ENCODE measurements at regions of chr1 and their contacts with region 1.

Region 1: GRCh38 chr1:43974443-43975248 is at the start of gene ATP6V0B:
- DNase-seq: peak; percentile 85 to 96 (median 91)
- ATAC-seq: peak; percentile 72
- H3K4me3 ChIP-seq: peak within 1 kb of the TSS; percentile 99
- H3K4me3 Mint-ChIP-seq: peak within 1 kb of the TSS; percentile 96
- H3K27ac ChIP-seq: peak within 1 kb of the TSS; percentile 78 to 86
- H3K27ac Mint-ChIP-seq: peak within 1 kb of the TSS; percentile 92
- H3K4me1 ChIP-seq: peaks cover 61% of the 10 kb centered on the region
- H3K4me1 Mint-ChIP-seq: peaks cover 68% of the 10 kb centered on the region
- H3K27me3 ChIP-seq: peaks cover under 1% of the 10 kb centered on the region in 2 experiments
- H3K27me3 Mint-ChIP-seq: peaks cover under 1% of the 10 kb centered on the region
- CTCF ChIP-seq: no peak
- total RNA-seq, gene ATP6V0B: 42.9 to 47.0 TPM

Region 2: GRCh38 chr1:43934101-43934985 is 40.3 kb before region 1 on chr1:
- CTCF ChIA-PET with region 1: interaction called, 13 read pairs
- POLR2A ChIA-PET with region 1: interaction called, 4 read pairs
- intact Hi-C with region 1: no loop called
- DNase-seq: peak in 13 of 14 experiments; percentile 18 to 69 (median 40)
- ATAC-seq: peak; percentile 65
- H3K4me3 ChIP-seq: no peak overlapping the region
- H3K4me3 Mint-ChIP-seq: peak overlapping the region; percentile 48
- H3K27ac ChIP-seq: no peak overlapping the region
- H3K27ac Mint-ChIP-seq: no peak overlapping the region
- H3K4me1 ChIP-seq: peaks cover 33% of the 10 kb centered on the region
- H3K4me1 Mint-ChIP-seq: peaks cover 15% of the 10 kb centered on the region
- H3K27me3 ChIP-seq: peaks cover 35 to 41% of the 10 kb centered on the region in 2 experiments
- H3K27me3 Mint-ChIP-seq: peaks cover 36% of the 10 kb centered on the region
- CTCF ChIP-seq: peak; percentile 68

Region 3: GRCh38 chr1:43958351-43959255 is 16.0 kb before region 1 on chr1:
- CTCF ChIA-PET with region 1: no interaction called
- POLR2A ChIA-PET with region 1: no interaction called
- intact Hi-C with region 1: no loop called
- DNase-seq: no peak
- ATAC-seq: no peak
- H3K4me3 ChIP-seq: no peak overlapping the region
- H3K4me3 Mint-ChIP-seq: no peak overlapping the region
- H3K27ac ChIP-seq: no peak overlapping the region
- H3K27ac Mint-ChIP-seq: no peak overlapping the region
- H3K4me1 ChIP-seq: no peaks in the 10 kb centered on the region
- H3K4me1 Mint-ChIP-seq: no peaks in the 10 kb centered on the region
- H3K27me3 ChIP-seq: no peaks in the 10 kb centered on the region
- H3K27me3 Mint-ChIP-seq: no peaks in the 10 kb centered on the region
- CTCF ChIP-seq: no peak

Region 4: GRCh38 chr1:43991476-43992231 is 17.0 kb after region 1 on chr1 and contains the start of gene CCDC24:
- CTCF ChIA-PET with region 1: interaction called, 10 read pairs
- POLR2A ChIA-PET with region 1: interaction called, 5 read pairs
- intact Hi-C with region 1: loop called in 1 of 2 experiments (anchors 1 kb)
- DNase-seq: peak; percentile 39 to 87 (median 67)
- ATAC-seq: peak; percentile 82
- H3K4me3 ChIP-seq: peak within 1 kb of the TSS; percentile 78
- H3K4me3 Mint-ChIP-seq: peak within 1 kb of the TSS; percentile 95
- H3K27ac ChIP-seq: no peak within 1 kb of the TSS
- H3K27ac Mint-ChIP-seq: peak within 1 kb of the TSS; percentile 62
- H3K4me1 ChIP-seq: peaks cover 19% of the 10 kb centered on the region
- H3K4me1 Mint-ChIP-seq: peaks cover 16% of the 10 kb centered on the region
- H3K27me3 ChIP-seq: no peaks in the 10 kb centered on the region
- H3K27me3 Mint-ChIP-seq: no peaks in the 10 kb centered on the region
- CTCF ChIP-seq: no peak
- total RNA-seq, gene CCDC24: 0.98 to 1.4 TPM

Region 5: DNA sequence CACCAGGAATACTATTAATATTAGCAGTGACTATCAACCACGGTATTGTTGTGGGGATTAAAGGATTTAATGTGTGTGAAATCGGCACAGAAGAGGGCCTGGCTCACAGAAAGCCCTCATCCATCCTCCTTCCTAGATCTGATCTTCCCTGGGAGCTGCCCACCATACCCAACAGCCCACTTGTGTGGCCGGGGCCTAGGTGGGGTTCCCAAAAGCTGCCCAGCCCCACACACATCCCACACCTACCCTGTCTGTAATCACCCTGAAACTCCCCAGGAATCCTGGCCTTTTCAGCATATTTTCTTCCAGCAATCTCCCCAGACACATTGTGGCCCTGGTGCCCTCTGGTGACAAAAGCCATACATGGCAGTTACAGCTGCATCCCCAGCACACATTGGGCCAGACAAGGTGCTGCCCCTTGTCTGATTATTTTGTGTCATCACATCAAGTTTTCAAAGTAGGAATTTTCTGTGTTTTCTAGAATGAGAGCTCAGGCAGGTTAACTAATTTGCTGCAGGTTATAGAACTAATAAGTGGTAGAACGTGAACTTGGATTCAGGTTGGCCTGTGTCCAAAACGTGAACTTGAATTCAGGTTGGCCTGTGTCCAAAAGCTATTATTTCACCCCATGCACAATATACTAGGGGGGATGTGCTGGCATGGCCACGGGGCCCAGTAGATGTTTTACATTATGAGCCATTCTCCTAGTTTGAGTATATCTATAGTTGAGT is 61.9 kb after region 1 on chr1:
- CTCF ChIA-PET with region 1: interaction called, 13 read pairs
- POLR2A ChIA-PET with region 1: no interaction called
- intact Hi-C with region 1: loop called in 1 of 2 experiments (anchors 2 kb)
- DNase-seq: peak; percentile 52 to 82 (median 61)
- ATAC-seq: peak; percentile 91
- H3K4me3 ChIP-seq: no peak overlapping the region
- H3K4me3 Mint-ChIP-seq: no peak overlapping the region
- H3K27ac ChIP-seq: no peak overlapping the region
- H3K27ac Mint-ChIP-seq: no peak overlapping the region
- H3K4me1 ChIP-seq: peaks cover 3% of the 10 kb centered on the region
- H3K4me1 Mint-ChIP-seq: peaks cover 4% of the 10 kb centered on the region
- H3K27me3 ChIP-seq: no peaks in the 10 kb centered on the region
- H3K27me3 Mint-ChIP-seq: no peaks in the 10 kb centered on the region
- CTCF ChIP-seq: peak; percentile 84

Region 6: DNA sequence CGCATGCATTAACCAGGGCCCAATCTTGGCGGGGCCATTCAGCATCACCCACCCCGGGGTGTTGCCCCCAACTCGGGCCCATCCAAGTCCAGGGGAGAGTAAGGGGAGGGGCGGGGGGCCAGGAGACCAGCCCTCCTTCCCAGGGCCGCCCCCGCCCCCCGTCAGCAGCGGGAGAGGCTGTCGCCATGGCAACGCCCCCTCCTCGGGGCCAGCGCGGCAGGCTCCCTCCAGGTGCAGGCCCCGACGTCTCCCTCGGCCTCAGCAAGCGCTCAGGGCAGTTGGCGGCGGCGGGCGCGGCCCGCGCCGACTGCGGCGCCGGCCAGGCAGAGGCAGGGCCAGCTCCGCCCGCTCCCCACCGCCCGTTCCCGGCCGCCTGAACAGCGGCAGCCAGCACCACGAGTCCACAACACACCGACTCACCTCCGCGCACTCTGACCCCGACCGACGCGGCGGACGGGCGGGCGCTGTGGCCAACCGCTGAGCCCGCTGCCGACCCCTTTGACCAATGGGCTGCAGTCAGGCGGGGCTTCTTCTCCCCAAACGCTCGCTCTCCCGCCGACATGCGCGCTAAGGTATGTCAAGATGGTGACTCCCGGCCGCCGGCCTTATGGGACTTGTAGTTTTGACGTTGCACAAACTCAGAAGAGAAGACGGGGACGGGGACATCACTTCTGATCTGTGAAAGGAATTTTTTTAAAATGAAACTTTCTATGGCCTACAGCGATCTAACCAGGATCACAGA is 380.4 kb after region 1 on chr1 and contains the start of gene ERI3:
- CTCF ChIA-PET with region 1: no interaction called
- POLR2A ChIA-PET with region 1: no interaction called
- intact Hi-C with region 1: loop called in 1 of 2 experiments (anchors 10 kb)
- DNase-seq: peak; percentile 93 to 98 (median 95)
- ATAC-seq: peak; percentile 100
- H3K4me3 ChIP-seq: peak within 1 kb of the TSS; percentile 80
- H3K4me3 Mint-ChIP-seq: peak within 1 kb of the TSS; percentile 94
- H3K27ac ChIP-seq: peak within 1 kb of the TSS in 1 of 2 donors; percentile 29
- H3K27ac Mint-ChIP-seq: peak within 1 kb of the TSS; percentile 63
- H3K4me1 ChIP-seq: peaks cover 19% of the 10 kb centered on the region
- H3K4me1 Mint-ChIP-seq: peaks cover 45% of the 10 kb centered on the region
- H3K27me3 ChIP-seq: no peaks in the 10 kb centered on the region
- H3K27me3 Mint-ChIP-seq: no peaks in the 10 kb centered on the region
- CTCF ChIP-seq: no peak
- total RNA-seq, gene ERI3: 19.7 to 20.7 TPM

Measured in CD4-positive, alpha-beta T cell (primary cell).